ENCODE measurements at regions of chr1 and their contacts with region 1.

Region 1: GRCh38 chr1:201481761-201482493 is 12.9 kb upstream of the PHLDA3 start:
- DNase-seq: no peak
- H3K4me3 ChIP-seq: no peak overlapping the region
- H3K27me3 ChIP-seq: no peaks in the 10 kb centered on the region
- CTCF ChIP-seq: peak; percentile 93

Region 2: GRCh38 chr1:201456499-201457309 is 25.2 kb before region 1 on chr1:
- CTCF ChIA-PET with region 1: interaction called, 121 read pairs
- POLR2A ChIA-PET with region 1: no interaction called
- DNase-seq: peak; percentile 93
- H3K4me3 ChIP-seq: no peak overlapping the region
- H3K27me3 ChIP-seq: no peaks in the 10 kb centered on the region
- CTCF ChIP-seq: no peak

Region 3: DNA sequence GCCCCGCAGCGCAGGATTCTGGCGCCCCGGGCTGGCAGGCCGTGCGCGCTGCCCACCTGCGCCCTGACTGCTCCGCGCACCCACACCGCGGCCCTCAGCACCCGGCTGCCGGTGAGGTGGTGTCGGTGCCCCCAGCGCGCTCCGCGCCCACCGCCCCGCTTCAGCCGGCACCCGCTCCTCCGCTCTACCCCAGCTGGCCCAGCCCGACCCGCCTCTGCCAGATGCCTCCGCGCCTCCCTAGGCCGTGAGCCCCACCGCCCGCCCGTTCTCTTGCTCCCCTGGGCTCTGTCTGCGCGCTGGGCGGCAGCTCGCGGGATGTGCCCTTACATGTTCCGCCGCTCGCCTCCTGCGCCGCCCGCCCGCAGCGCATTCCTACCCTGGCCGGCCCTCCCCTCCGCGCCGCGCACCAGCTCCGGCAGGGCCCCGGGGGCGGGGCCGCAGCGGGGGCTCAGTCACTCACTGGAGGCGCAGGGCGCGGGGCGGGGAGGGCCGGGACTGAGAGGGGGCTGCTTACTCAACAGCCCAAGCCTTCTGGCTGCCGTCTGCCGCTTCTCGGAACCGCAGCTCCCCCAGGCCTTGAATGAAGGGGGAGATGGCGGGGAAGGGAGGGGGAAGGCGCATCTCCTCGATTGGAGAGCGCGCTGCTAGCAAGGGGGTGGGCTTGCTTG is 12.9 kb before region 1 on chr1 and contains the start of gene PHLDA3:
- CTCF ChIA-PET with region 1: interaction called, 34 read pairs
- POLR2A ChIA-PET with region 1: no interaction called
- DNase-seq: peak; percentile 70
- H3K4me3 ChIP-seq: peak within 1 kb of the TSS; percentile 67
- H3K27me3 ChIP-seq: no peaks in the 10 kb centered on the region
- CTCF ChIP-seq: 0 out of 2 replicates have a peak, but pooled peaks have one; percentile 3
- polyA plus RNA-seq, gene PHLDA3: 87.3 and 130 TPM in 2 replicates

Region 4: GRCh38 chr1:201506556-201507359 is 24.8 kb after region 1 on chr1 and contains the start of gene CSRP1:
- CTCF ChIA-PET with region 1: interaction called, 650 read pairs
- POLR2A ChIA-PET with region 1: interaction called, 4 read pairs
- DNase-seq: no peak
- H3K4me3 ChIP-seq: peak within 1 kb of the TSS; percentile 69
- H3K27me3 ChIP-seq: no peaks in the 10 kb centered on the region
- CTCF ChIP-seq: no peak
- polyA plus RNA-seq, gene CSRP1: 720 and 957 TPM in 2 replicates